ENCODE measurements at regions of chr19 and their contacts with region 1.

Region 1: GRCh38 chr19:18795540-18795939 is 4.4 kb upstream of the COMP start:
- DNase-seq: no peak
- H3K4me3 ChIP-seq: no peak overlapping the region
- H3K27ac ChIP-seq: no peak overlapping the region
- H3K4me1 ChIP-seq: peaks cover 7% of the 10 kb centered on the region
- H3K27me3 ChIP-seq: peaks cover 9% of the 10 kb centered on the region
- CTCF ChIP-seq: no peak

Region 2: GRCh38 chr19:18725841-18726770 is 69.4 kb before region 1 on chr19:
- CTCF ChIA-PET with region 1: no interaction called
- dilution Hi-C with region 1: no loop called
- in situ Hi-C with region 1: no loop called
- intact Hi-C with region 1: no loop called
- DNase-seq: no peak
- H3K4me3 ChIP-seq: no peak overlapping the region
- H3K27ac ChIP-seq: no peak overlapping the region
- H3K4me1 ChIP-seq: no peaks in the 10 kb centered on the region
- H3K27me3 ChIP-seq: no peaks in the 10 kb centered on the region
- CTCF ChIP-seq: no peak

Region 3: DNA sequence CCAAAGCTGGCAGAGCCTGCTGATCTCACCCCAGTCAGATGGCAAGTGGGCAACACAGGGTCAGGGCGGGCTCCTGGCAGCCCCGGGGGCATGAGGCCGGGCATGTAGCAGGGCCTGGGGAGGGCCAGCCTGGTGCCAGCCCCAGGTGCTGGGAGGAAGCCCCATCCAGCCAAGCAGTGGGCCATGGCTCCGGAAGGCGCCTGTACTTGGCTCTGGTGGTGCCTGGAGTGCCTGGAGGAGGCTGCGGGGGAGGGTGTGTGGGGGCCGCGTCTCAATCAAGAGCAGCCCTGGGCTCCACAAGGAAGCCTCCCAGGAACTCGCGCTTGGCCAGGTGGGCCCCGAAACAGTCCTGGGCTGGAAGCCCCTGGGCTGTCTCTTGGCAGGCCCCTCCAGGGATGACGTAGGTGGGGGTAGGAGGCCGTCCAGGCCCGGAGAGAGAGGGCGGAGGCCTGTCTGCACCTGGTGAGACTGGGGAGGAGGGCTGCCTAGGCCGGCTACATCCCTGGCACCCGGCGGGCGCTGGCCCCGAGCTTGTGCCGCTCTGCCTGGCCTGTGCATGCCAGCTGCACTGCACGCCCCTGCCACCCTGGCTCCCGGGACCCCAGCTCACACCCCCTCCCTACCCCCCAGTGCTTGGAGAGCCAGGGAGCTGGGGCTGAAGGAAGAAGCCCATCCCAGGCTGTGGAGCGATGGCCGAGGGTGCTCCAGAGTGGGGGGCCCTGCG is 50.4 kb before region 1 on chr19:
- CTCF ChIA-PET with region 1: no interaction called
- dilution Hi-C with region 1: loop called (anchors 5 kb)
- in situ Hi-C with region 1: no loop called
- intact Hi-C with region 1: no loop called
- DNase-seq: no peak
- H3K4me3 ChIP-seq: no peak overlapping the region
- H3K27ac ChIP-seq: no peak overlapping the region
- H3K4me1 ChIP-seq: no peaks in the 10 kb centered on the region
- H3K27me3 ChIP-seq: no peaks in the 10 kb centered on the region
- CTCF ChIP-seq: no peak